Activated T-helper 1 cell treated with anti-CD3 and anti-CD28 coated beads, Interleukin-12 subunit alpha, Interleukin-12 subunit beta, Interleukin-2, Interleukin-4 antibody, amounts not matched to agents 30 ng/mL and 10 ng/mL and 1 ng/mL, durations not matched to agents 14 hours and 24 hours and 36 hours (primary cell): ENCODE measurements at regions of chr3 and their contacts with region 1.

Region 1: GRCh38 chr3:100334488-100335351 is at the start of gene NIT2:
- DNase-seq: peak; percentile 73
- H3K4me3 Mint-ChIP-seq: peak within 1 kb of the TSS; percentile 94
- H3K27ac Mint-ChIP-seq: peak within 1 kb of the TSS; percentile 98
- H3K4me1 Mint-ChIP-seq: peaks cover 14% of the 10 kb centered on the region
- H3K27me3 Mint-ChIP-seq: no peaks in the 10 kb centered on the region
- total RNA-seq, gene NIT2: 65.9 and 69.5 TPM in 2 replicates

Region 2: GRCh38 chr3:99833617-99834205 is 501.0 kb before region 1 on chr3:
- intact Hi-C with region 1: loop called (anchors 5 kb)
- DNase-seq: no peak
- H3K4me3 Mint-ChIP-seq: no peak overlapping the region
- H3K27ac Mint-ChIP-seq: no peak overlapping the region
- H3K4me1 Mint-ChIP-seq: peaks cover 12% of the 10 kb centered on the region
- H3K27me3 Mint-ChIP-seq: no peaks in the 10 kb centered on the region

Region 3: DNA sequence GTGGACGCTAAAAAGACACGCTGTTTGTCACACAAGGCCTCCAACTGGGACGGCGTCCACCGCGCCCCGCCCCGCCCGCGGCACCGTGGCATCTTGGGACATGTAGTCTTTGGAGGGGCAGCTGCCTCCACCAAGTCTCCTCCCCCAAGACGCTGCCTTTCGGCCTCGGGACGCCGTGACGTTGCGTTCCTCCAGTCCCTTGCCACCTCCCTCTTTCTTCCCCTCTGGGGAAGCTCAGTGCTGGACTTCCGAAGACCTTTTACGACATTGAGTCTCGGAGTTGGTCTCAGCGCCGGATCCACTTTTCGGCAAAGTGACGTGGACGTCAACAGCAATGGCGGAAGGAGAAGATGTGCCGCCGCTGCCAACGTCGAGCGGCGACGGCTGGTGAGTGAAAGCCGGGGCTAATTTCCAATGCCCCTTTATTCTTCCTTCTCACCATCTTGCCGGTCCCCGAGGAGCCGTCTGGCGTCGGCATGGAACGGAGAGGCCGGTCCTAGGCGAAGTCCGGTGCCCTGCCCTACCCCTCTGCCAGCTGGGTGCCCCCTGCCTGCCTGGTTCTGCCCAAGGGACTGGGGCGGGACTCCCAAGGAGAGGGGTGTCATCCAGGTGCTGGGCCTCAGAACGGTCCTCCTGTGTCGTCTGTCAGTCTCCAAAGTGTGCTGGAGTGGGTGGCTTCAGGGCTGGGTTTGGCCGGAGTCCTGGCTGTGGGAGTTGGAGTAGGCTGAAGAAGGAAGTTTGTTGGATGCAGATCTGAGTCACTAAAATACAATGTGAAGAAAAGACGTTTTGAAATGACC is 73.8 kb before region 1 on chr3 and contains the start of gene TBC1D23:
- intact Hi-C with region 1: loop called (anchors 2 kb)
- DNase-seq: peak; percentile 97
- H3K4me3 Mint-ChIP-seq: peak within 1 kb of the TSS; percentile 92
- H3K27ac Mint-ChIP-seq: peak within 1 kb of the TSS; percentile 97
- H3K4me1 Mint-ChIP-seq: peaks cover 38% of the 10 kb centered on the region
- H3K27me3 Mint-ChIP-seq: no peaks in the 10 kb centered on the region
- total RNA-seq, gene TBC1D23: 18.3 and 19.0 TPM in 2 replicates

Region 4: GRCh38 chr3:100269410-100270217 is 65.1 kb before region 1 on chr3:
- intact Hi-C with region 1: loop called (anchors 2 kb)
- DNase-seq: no peak
- H3K4me3 Mint-ChIP-seq: no peak overlapping the region
- H3K27ac Mint-ChIP-seq: no peak overlapping the region
- H3K4me1 Mint-ChIP-seq: peaks cover 17% of the 10 kb centered on the region
- H3K27me3 Mint-ChIP-seq: peaks cover 2% of the 10 kb centered on the region

Region 5: DNA sequence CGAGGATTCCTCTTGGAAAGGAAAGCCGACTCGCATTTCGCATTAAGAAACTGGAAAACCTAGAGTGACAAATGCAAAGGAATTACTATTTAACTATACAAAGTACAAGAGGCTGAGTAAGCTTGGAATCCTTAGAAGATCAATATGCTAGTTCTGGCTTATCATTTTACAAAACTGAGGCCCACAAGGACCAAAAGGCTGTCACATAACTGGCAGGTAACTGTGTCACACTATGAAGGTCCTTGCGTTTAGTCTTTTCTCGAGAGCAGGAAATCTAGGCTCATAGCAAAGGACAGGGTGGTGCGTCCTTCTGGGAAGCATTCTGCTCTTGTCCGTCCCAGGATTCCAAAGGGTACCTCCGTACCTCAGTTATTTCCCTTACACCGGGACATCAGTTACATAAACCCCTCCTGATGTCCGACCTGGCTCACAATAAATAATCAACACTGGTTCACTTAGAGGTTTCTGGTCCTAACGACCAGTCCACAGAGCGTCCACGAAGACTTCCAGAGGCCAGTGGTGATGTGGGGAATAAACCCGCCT is 1351.2 kb after region 1 on chr3:
- intact Hi-C with region 1: loop called (anchors 10 kb)
- DNase-seq: no peak
- H3K4me3 Mint-ChIP-seq: peak overlapping the region; percentile 99
- H3K27ac Mint-ChIP-seq: peak overlapping the region; percentile 97
- H3K4me1 Mint-ChIP-seq: peaks cover 29% of the 10 kb centered on the region
- H3K27me3 Mint-ChIP-seq: no peaks in the 10 kb centered on the region